Upper lobe of right lung (tissue), 1 donor: ENCODE measurements at regions of chr7 and their contacts with region 1.

Region 1: DNA sequence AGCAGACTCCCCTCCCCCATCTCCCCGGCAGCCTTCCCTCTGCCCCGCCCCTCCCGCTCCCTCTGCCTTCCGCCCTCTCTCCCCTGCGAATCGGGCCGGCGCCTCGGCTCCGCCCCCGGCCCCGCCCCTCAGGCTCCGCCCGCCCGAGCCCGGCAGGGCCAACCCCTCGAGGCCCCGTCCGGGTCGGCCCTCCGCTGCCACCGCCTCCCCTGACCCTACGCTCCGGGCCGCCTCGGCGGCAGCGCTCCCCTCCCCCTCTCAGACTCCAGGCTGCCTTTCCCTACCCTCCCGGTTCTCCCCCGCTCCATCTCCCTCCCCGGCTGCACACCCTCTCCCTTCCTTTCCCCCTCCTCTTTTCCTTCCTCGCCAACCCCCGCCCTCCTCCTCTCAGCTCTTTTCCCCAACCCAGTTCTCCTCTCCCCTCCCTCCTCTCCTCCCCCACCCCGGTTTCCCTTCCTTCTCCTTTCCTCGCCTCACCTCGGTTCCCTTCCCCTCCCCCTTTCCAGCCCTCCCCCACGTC is 1.6 kb downstream of the ZNF467 start:
- DNase-seq: peak; percentile 96
- ATAC-seq: peak; percentile 94
- H3K4me3 ChIP-seq: peak overlapping the region; percentile 64
- H3K27ac ChIP-seq: peak overlapping the region; percentile 60
- H3K4me1 ChIP-seq: peaks cover 14% of the 10 kb centered on the region
- H3K27me3 ChIP-seq: no peaks in the 10 kb centered on the region
- CTCF ChIP-seq: no peak

Region 2: DNA sequence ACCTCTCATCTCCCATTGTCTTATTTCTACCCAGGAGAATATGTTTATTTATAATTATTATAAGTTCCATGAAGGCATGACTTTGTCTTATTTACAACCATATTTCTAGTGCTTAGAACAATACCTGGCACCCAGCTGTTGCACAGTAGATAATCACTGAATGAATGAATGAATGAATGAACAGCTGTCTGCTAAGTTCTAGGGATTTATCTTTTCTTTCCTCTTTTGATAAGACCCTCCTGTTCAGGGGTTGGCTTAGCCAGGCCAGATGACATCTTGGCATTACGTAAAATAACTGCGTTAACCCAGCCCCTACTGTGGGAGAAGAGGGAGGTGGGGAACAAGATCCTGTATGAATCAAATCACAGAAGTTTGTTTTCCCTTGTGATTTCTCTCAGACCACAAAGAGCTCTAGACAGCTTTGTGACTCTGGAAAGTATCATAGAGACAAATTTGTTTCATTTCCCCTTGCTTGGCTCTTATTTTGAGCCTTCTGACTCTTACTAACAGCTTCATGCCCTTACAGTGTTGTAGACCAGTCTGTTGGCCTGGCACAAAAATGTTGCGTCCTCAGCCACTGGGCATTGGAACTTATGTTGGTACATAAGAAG is 74.8 kb after region 1 on chr7:
- intact Hi-C with region 1: no loop called
- DNase-seq: no peak
- ATAC-seq: no peak
- H3K4me3 ChIP-seq: no peak overlapping the region
- H3K27ac ChIP-seq: peak overlapping the region; percentile 11
- H3K4me1 ChIP-seq: no peaks in the 10 kb centered on the region
- H3K27me3 ChIP-seq: no peaks in the 10 kb centered on the region
- CTCF ChIP-seq: no peak

Region 3: DNA sequence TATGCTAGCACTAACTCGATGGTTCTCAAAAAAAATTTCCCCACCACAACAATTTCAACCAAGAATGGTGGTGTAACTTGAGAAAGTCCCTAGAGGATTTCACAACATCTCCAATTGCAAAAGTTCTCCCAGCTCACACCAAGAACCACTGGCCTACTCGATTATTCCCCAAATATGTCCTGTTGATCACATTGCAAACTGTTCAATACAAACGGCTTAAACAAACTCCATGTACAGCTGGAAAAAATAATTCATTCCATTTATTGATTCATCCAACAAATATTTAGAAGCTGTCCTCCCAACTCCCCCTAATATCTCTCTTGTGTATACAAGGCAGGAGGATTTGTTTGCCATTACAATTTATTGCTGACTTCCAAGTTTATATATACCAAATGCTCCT is 1009.3 kb after region 1 on chr7:
- intact Hi-C with region 1: loop called (anchors 5 kb)
- DNase-seq: no peak
- ATAC-seq: peak; percentile 25
- H3K4me3 ChIP-seq: no peak overlapping the region
- H3K27ac ChIP-seq: peak overlapping the region; percentile 12
- H3K4me1 ChIP-seq: peaks cover 27% of the 10 kb centered on the region
- H3K27me3 ChIP-seq: no peaks in the 10 kb centered on the region
- CTCF ChIP-seq: no peak